CD4-positive, alpha-beta memory T cell (primary cell): ENCODE measurements at regions of chr10 and their contacts with region 1.

Region 1: DNA sequence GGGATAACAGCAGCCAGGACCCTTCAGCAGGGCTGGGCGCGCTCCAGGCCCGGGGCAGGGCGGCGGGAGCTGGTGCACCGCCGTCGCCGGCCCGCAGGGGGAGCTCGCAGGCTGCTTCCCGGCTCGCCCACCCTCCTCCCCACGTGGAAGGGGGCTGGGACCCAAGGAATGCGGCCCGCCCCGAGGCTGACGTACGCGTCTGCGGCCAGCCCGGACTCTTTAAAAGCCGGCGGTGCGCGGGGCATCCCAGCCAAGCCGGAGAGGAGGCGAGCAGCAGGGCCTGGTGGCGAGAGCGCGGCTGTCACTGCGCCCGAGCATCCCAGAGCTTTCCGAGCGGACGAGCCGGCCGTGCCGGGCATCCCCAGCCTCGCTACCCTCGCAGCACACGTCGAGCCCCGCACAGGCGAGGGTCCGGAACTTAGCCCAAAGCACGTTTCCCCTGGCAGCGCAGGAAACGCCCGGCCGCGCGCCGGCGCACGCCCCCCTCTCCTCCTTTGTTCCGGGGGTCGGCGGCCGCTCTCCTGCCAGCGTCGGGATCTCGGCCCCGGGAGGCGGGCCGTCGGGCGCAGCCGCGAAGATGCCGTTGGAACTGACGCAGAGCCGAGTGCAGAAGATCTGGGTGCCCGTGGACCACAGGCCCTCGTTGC is at the start of gene PFKFB3:
- DNase-seq: peak; percentile 84 to 90 (median 86)
- H3K4me3 ChIP-seq: peak within 1 kb of the TSS; percentile 77 to 84
- H3K4me3 Mint-ChIP-seq: peak within 1 kb of the TSS; percentile 95 to 99 (median 96)
- H3K27ac ChIP-seq: peak within 1 kb of the TSS; percentile 71
- H3K27ac Mint-ChIP-seq: peak within 1 kb of the TSS; percentile 94 to 97 (median 96)
- H3K4me1 ChIP-seq: peaks cover 23% of the 10 kb centered on the region
- H3K4me1 Mint-ChIP-seq: peaks cover 22 to 51% (median 27%) of the 10 kb centered on the region in 4 donors
- H3K27me3 ChIP-seq: no peaks in the 10 kb centered on the region
- H3K27me3 Mint-ChIP-seq: no peaks in the 10 kb centered on the region
- total RNA-seq, gene PFKFB3: 55.7 to 67.1 TPM

Region 2: DNA sequence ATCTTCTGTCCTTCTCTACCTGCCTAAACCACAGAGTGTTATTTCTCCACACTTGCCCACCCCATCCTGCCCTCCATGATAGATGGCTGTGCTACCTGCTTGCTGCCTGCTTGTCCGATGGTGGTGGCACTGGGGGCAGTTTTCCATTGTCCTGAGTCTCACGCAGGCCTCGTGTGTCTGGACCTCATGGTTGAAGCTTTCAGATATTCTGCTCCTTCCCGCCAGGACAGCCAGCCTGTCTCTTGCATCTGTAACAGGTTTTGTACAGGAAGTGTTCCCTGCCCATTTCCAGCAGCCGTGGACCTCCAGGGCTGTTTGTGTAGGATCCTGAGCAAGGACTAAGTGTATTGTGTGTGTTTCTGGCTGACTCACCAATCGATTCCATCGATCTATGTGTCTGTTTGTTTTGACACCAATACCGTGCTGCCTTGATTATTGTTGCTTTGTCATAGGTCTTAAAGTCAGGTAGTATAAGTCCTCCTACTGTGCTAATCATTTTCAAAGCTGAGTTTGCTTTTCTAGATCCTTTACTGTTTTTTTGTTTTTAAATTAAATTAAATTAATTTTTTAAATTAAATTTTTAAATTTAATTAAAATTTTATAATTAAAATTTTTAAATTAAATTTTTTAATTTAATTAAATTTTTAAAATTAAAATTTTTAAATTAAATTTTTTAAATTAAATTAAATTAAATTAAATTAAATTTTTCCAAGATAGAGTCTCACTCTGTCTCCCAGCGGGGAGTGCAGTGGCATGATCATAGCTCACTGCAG is 233.9 kb before region 1 on chr10:
- CTCF ChIA-PET with region 1: no interaction called
- POLR2A ChIA-PET with region 1: no interaction called
- intact Hi-C with region 1: no loop called
- DNase-seq: no peak
- H3K4me3 ChIP-seq: no peak overlapping the region
- H3K4me3 Mint-ChIP-seq: peak overlapping the region in 1 of 8 donors; percentile 13
- H3K27ac ChIP-seq: no peak overlapping the region
- H3K27ac Mint-ChIP-seq: peak overlapping the region in 2 of 7 donors; percentile 31 to 65
- H3K4me1 ChIP-seq: peaks cover 24% of the 10 kb centered on the region
- H3K4me1 Mint-ChIP-seq: peaks cover 24 to 44% (median 38%) of the 10 kb centered on the region in 4 donors
- H3K27me3 ChIP-seq: no peaks in the 10 kb centered on the region
- H3K27me3 Mint-ChIP-seq: no peaks in the 10 kb centered on the region

Region 3: GRCh38 chr10:6108603-6109443 is 94.0 kb before region 1 on chr10:
- CTCF ChIA-PET with region 1: interaction called, 25 read pairs
- POLR2A ChIA-PET with region 1: interaction called, 7 read pairs
- intact Hi-C with region 1: loop called (anchors 1 kb)
- DNase-seq: peak; percentile 57 to 69 (median 65)
- H3K4me3 ChIP-seq: no peak overlapping the region
- H3K4me3 Mint-ChIP-seq: peak overlapping the region in 7 of 8 donors; percentile 67 to 85 (median 75)
- H3K27ac ChIP-seq: peak overlapping the region; percentile 45
- H3K27ac Mint-ChIP-seq: peak overlapping the region; percentile 43 to 95 (median 91)
- H3K4me1 ChIP-seq: peaks cover 28% of the 10 kb centered on the region
- H3K4me1 Mint-ChIP-seq: peaks cover 29 to 54% (median 37%) of the 10 kb centered on the region in 4 donors
- H3K27me3 ChIP-seq: no peaks in the 10 kb centered on the region
- H3K27me3 Mint-ChIP-seq: no peaks in the 10 kb centered on the region

Region 4: GRCh38 chr10:6151087-6151977 is 51.5 kb before region 1 on chr10:
- CTCF ChIA-PET with region 1: interaction called, 15 read pairs
- POLR2A ChIA-PET with region 1: interaction called, 5 read pairs
- intact Hi-C with region 1: no loop called
- DNase-seq: peak in 4 of 5 donors; percentile 46 to 64 (median 56)
- H3K4me3 ChIP-seq: no peak overlapping the region
- H3K4me3 Mint-ChIP-seq: peak overlapping the region in 7 of 8 donors; percentile 36 to 75 (median 58)
- H3K27ac ChIP-seq: peak overlapping the region; percentile 1
- H3K27ac Mint-ChIP-seq: peak overlapping the region; percentile 86 to 93 (median 91)
- H3K4me1 ChIP-seq: peaks cover 47% of the 10 kb centered on the region
- H3K4me1 Mint-ChIP-seq: peaks cover 36 to 81% (median 49%) of the 10 kb centered on the region in 4 donors
- H3K27me3 ChIP-seq: no peaks in the 10 kb centered on the region
- H3K27me3 Mint-ChIP-seq: no peaks in the 10 kb centered on the region

Region 5: GRCh38 chr10:6182454-6183098 is 20.2 kb before region 1 on chr10:
- CTCF ChIA-PET with region 1: interaction called, 10 read pairs
- POLR2A ChIA-PET with region 1: interaction called, 6 read pairs
- intact Hi-C with region 1: no loop called
- DNase-seq: no peak
- H3K4me3 ChIP-seq: no peak overlapping the region
- H3K4me3 Mint-ChIP-seq: no peak overlapping the region
- H3K27ac ChIP-seq: no peak overlapping the region
- H3K27ac Mint-ChIP-seq: peak overlapping the region in 1 of 7 donors; percentile 65
- H3K4me1 ChIP-seq: no peaks in the 10 kb centered on the region
- H3K4me1 Mint-ChIP-seq: peaks cover 7 to 45% (median 18%) of the 10 kb centered on the region in 4 donors
- H3K27me3 ChIP-seq: no peaks in the 10 kb centered on the region
- H3K27me3 Mint-ChIP-seq: no peaks in the 10 kb centered on the region

Region 6: DNA sequence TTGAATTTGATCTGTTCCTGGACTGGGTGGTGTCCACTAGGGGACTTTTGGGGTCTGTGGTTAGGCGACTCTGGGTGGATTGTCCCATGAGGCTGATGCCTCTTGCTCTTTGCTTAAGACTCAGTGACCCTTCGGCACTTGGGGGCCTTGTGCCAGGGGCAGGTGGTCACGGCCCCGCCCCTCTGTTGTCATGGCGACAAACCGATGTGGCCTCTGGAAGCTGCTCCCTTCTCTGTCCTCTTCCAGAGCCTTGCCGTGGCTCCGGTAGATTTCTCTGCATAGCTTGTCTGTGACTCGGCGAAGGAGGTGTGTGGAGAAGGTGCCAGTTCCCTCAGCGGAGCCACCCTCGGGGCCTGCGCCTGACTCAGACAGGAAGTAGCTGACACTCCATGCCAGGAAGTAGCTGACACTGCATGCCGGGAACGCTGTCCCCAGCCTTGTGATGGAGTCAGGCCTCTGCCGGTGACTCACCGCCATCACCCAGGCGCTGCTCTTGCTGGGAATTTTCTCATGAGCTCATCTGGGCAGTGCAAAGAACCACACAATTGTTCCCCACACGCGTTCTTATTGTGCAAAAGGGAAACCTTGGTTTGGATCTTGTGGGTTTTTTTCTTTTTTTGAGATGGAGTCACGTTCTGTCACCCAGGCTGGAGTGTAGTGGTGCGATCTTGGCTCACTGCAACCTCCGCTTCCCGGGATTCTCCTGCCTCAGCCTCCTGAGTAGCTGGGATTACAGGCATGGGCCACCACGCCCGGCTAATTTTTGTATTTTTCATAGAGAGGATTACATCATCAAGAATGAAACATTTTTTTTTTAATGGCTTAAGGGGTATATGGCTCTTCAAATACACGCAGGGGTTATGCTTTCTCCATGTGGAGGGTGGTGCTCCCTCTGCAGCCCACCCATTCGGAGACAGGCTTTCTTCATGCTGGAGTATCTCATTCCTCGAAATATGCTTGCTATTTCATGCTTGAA is 72.5 kb after region 1 on chr10:
- CTCF ChIA-PET with region 1: interaction called, 12 read pairs
- POLR2A ChIA-PET with region 1: interaction called, 8 read pairs
- intact Hi-C with region 1: loop called (anchors 2 kb)
- DNase-seq: peak; percentile 81 to 98 (median 86)
- H3K4me3 ChIP-seq: peak overlapping the region in 1 of 2 donors; percentile 26
- H3K4me3 Mint-ChIP-seq: peak overlapping the region; percentile 63 to 87 (median 78)
- H3K27ac ChIP-seq: peak overlapping the region; percentile 59
- H3K27ac Mint-ChIP-seq: peak overlapping the region; percentile 91 to 98 (median 94)
- H3K4me1 ChIP-seq: peaks cover 40% of the 10 kb centered on the region
- H3K4me1 Mint-ChIP-seq: peaks cover 26 to 52% (median 37%) of the 10 kb centered on the region in 4 donors
- H3K27me3 ChIP-seq: no peaks in the 10 kb centered on the region
- H3K27me3 Mint-ChIP-seq: no peaks in the 10 kb centered on the region

Region 7: DNA sequence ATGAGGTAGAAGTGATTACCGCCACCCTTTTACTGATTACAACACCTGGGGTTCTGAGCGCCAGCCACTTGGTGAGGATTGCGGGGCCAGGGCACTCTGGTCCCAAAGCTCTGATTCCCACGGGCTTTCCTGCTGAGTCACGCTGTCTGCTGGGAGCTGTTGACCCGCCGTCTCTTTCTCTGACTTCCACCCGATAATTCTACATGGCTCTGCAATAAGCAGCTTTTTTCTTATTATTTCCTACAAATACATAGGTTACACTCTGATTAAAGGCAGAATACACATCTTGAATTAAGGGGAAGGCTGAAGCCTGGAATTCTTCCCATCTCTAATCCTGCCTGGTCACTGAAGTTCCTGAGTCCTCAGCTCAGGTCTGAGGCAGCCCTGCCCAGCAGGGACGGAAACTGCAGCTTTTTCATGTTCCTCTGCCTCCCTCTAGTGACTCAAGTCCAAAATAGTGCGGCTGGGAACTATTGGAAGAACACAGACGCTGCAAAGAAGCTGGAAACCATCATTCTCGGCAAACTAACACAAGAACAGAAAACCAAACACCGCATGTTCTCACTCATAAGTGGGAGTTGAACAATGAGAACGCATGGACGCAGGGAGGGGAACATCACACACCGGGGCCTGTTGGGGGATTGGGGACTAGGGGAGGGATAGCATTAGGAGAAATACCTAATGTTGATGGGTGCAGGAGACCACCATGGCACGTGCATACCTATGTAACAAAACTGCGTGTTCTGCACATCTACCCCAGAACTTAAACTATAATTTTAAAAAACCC is 198.9 kb after region 1 on chr10:
- CTCF ChIA-PET with region 1: interaction called, 217 read pairs
- POLR2A ChIA-PET with region 1: interaction called, 53 read pairs
- intact Hi-C with region 1: loop called (anchors 1 kb)
- DNase-seq: peak; percentile 57 to 70 (median 65)
- H3K4me3 ChIP-seq: no peak overlapping the region
- H3K4me3 Mint-ChIP-seq: peak overlapping the region in 2 of 8 donors; percentile 51 to 63
- H3K27ac ChIP-seq: no peak overlapping the region
- H3K27ac Mint-ChIP-seq: peak overlapping the region; percentile 32 to 90 (median 64)
- H3K4me1 ChIP-seq: peaks cover 16% of the 10 kb centered on the region
- H3K4me1 Mint-ChIP-seq: peaks cover 8 to 24% (median 13%) of the 10 kb centered on the region in 4 donors
- H3K27me3 ChIP-seq: no peaks in the 10 kb centered on the region
- H3K27me3 Mint-ChIP-seq: peaks cover 0 to 1% of the 10 kb centered on the region in 2 donors

Region 8: DNA sequence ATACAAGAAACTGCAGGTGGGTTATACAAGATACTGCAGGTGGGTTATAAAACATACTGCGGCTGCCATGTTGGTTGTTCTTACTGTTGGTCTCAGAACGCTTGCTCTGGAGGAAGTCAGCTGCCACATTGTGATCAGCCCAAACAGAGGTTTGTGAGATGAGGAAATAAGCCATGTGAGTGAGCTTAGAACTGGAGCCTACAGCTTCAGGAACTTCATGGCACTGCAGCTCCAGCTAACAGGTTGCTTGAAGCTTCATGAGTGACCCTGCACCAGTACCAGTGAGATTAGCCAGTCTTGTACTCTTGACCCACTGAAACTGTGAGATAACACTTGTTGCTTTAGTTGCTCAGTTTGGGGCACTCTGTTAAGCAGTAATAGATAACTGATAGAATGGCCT is 451.8 kb after region 1 on chr10:
- CTCF ChIA-PET with region 1: no interaction called
- POLR2A ChIA-PET with region 1: no interaction called
- intact Hi-C with region 1: no loop called
- DNase-seq: no peak
- H3K4me3 ChIP-seq: no peak overlapping the region
- H3K4me3 Mint-ChIP-seq: no peak overlapping the region
- H3K27ac ChIP-seq: no peak overlapping the region
- H3K27ac Mint-ChIP-seq: no peak overlapping the region
- H3K4me1 ChIP-seq: no peaks in the 10 kb centered on the region
- H3K4me1 Mint-ChIP-seq: peaks cover 0 to 6% (median 3%) of the 10 kb centered on the region in 4 donors
- H3K27me3 ChIP-seq: no peaks in the 10 kb centered on the region
- H3K27me3 Mint-ChIP-seq: peaks cover 0 to 2% of the 10 kb centered on the region in 2 donors

Region 9: GRCh38 chr10:7085913-7086589 is 883.2 kb after region 1 on chr10:
- CTCF ChIA-PET with region 1: no interaction called
- POLR2A ChIA-PET with region 1: no interaction called
- intact Hi-C with region 1: no loop called
- DNase-seq: no peak
- H3K4me3 ChIP-seq: no peak overlapping the region
- H3K4me3 Mint-ChIP-seq: no peak overlapping the region
- H3K27ac ChIP-seq: no peak overlapping the region
- H3K27ac Mint-ChIP-seq: no peak overlapping the region
- H3K4me1 ChIP-seq: no peaks in the 10 kb centered on the region
- H3K4me1 Mint-ChIP-seq: peaks cover 0 to 3% (median 0%) of the 10 kb centered on the region in 4 donors
- H3K27me3 ChIP-seq: no peaks in the 10 kb centered on the region
- H3K27me3 Mint-ChIP-seq: peaks cover 6 to 15% of the 10 kb centered on the region in 2 donors